Activated CD4-positive, alpha-beta T cell treated with anti-CD3 and anti-CD28 coated beads, Interleukin-2, amount 10 ng/mL, durations not matched to agents 24 days and 14 days (primary cell): ENCODE measurements at regions of chr1 and their contacts with region 1.

Region 1: DNA sequence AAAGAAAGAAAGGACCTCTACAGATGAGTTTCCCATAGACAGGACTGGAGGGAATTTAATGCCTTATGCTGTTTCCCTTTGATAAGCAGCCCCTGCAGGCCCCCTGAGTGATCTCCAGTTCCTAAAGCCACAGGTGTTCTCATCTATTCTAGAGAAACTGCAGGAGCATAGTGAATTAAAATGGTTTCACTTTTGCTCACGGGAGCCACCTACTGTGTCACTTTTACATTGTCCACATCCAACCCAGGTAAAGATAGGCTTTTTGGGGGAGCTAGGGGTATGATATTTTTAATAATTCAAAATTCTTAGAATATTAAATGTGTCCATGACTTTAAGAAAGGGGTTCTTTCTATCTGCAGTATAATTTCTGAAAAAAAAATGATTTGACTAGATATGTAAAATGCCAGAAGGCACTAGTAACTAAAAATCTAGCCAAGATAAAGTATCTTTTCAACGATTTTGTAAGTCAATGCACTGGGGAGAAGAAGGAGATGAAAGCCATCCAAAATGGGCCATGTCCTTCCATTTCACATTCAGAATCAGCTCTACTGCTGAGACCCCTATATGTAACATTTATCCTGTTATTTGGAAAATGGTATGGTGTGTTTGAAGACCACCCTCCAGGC is 267.3 kb upstream of the DUSP10 start:
- DNase-seq: peak; percentile 79
- H3K4me3 Mint-ChIP-seq: no peak overlapping the region
- H3K27ac Mint-ChIP-seq: no peak overlapping the region
- H3K4me1 Mint-ChIP-seq: no peaks in the 10 kb centered on the region
- H3K27me3 Mint-ChIP-seq: peaks cover 12% of the 10 kb centered on the region

Region 2: GRCh38 chr1:221543529-221544120 is 465.6 kb before region 1 on chr1:
- intact Hi-C with region 1: loop called (anchors 10 kb)
- DNase-seq: no peak
- H3K4me3 Mint-ChIP-seq: no peak overlapping the region
- H3K27ac Mint-ChIP-seq: no peak overlapping the region
- H3K4me1 Mint-ChIP-seq: no peaks in the 10 kb centered on the region
- H3K27me3 Mint-ChIP-seq: peaks cover 20% of the 10 kb centered on the region

Region 3: DNA sequence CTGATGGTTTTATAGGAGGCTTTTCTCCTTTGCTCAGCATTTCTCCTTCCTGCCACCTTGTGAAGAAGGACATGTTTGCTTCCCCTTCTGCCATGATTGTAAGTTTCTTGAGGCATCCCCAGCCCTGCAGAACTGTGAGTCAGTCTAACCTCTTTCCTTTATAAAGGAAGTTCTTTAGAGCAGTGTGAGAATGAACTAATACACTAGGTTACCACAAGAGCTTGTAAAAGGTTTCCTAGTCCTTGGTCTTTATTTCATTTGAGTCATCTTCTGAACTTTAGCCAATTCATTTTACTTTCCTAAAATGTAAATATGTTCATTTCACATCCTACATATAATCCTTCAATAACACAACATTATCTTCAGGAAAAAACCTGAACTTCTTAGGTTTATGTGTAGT is 173.4 kb after region 1 on chr1:
- intact Hi-C with region 1: no loop called
- DNase-seq: no peak
- H3K4me3 Mint-ChIP-seq: no peak overlapping the region
- H3K27ac Mint-ChIP-seq: no peak overlapping the region
- H3K4me1 Mint-ChIP-seq: no peaks in the 10 kb centered on the region
- H3K27me3 Mint-ChIP-seq: no peaks in the 10 kb centered on the region